ENCODE measurements at regions of chr14 and their contacts with region 1.

Region 1: GRCh38 chr14:21034707-21035106 is at the start of gene RNASE13:
- DNase-seq: no peak
- H3K4me3 ChIP-seq: no peak within 1 kb of the TSS
- H3K27ac ChIP-seq: no peak within 1 kb of the TSS
- H3K4me1 ChIP-seq: no peaks in the 10 kb centered on the region
- H3K27me3 ChIP-seq: no peaks in the 10 kb centered on the region; the same call in 1 of the 2 replicates
- CTCF ChIP-seq: no peak
- total RNA-seq, gene RNASE13: not detected in 2 replicates

Region 2: DNA sequence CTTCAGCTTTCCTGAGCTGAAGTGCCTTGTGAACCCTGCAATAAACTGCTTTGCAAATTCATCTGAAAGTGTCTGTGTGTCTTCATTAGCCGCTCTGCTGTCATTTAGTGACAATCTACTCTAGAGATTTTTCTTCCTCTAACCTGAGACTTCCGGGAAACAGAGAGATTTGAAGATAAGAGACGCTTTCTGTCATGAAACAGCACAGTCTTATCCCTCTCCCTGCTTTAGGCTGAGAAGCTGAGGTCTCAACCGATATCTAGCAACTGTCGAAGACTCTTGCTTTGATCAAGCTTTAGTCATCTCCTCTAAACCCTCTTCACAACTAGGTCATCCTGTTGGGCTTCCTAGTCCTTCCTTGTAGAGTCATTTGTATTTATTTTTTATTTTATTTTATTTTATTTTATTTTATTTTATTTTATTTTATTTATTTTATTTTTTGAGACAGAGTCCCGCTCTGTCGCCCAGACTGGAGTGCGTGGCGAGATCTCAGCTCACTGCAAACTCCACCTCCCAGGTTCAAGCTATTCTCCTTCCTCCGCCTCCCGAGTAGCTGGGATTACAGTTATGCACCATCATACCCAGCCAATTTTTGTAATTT is 78.2 kb before region 1 on chr14:
- CTCF ChIA-PET with region 1: interaction called, 10 read pairs
- POLR2A ChIA-PET with region 1: no interaction called
- intact Hi-C with region 1: no loop called
- DNase-seq: no peak
- H3K4me3 ChIP-seq: no peak overlapping the region
- H3K27ac ChIP-seq: no peak overlapping the region
- H3K4me1 ChIP-seq: no peaks in the 10 kb centered on the region
- H3K27me3 ChIP-seq: no peaks in the 10 kb centered on the region; the same call in 1 of the 2 replicates
- CTCF ChIP-seq: no peak

Region 3: GRCh38 chr14:21087294-21088091 is 52.8 kb after region 1 on chr14:
- CTCF ChIA-PET with region 1: no interaction called
- POLR2A ChIA-PET with region 1: no interaction called
- intact Hi-C with region 1: no loop called
- DNase-seq: no peak
- H3K4me3 ChIP-seq: no peak overlapping the region
- H3K27ac ChIP-seq: no peak overlapping the region
- H3K4me1 ChIP-seq: no peaks in the 10 kb centered on the region
- H3K27me3 ChIP-seq: no peaks in the 10 kb centered on the region
- CTCF ChIP-seq: no peak

Region 4: DNA sequence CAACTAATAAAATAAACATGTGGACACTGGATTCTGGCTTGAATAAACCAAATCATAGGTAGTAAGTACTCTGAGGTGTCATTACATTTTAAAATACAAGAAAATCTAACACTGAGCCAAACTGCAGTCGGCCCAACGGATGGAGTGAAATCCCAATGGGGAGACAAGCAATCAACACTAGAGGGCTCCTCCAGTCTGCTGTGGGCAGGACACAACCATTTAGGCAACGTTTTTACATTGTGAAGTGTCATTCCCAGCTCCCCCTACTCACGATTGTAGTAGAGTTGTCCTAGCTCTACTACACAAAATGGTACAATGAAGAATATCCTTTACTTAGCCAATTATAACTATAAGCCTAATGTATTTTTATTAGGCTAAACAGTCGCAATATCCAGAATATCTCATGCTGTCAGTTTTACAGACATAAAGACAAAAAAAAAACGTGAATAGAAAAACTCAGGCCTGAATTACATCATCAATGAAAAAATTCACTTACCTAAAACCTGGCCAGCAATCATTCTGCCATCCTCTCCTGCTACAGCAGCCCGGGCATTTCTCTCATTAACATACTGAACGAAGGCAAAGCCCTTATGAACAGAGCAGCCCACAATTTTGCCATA is 198.9 kb after region 1 on chr14:
- CTCF ChIA-PET with region 1: no interaction called
- POLR2A ChIA-PET with region 1: no interaction called
- intact Hi-C with region 1: no loop called
- DNase-seq: no peak
- H3K4me3 ChIP-seq: no peak overlapping the region
- H3K27ac ChIP-seq: peak overlapping the region; percentile 20; the same call in 1 of the 2 replicates
- H3K4me1 ChIP-seq: no peaks in the 10 kb centered on the region
- H3K27me3 ChIP-seq: no peaks in the 10 kb centered on the region
- CTCF ChIP-seq: no peak

Region 5: DNA sequence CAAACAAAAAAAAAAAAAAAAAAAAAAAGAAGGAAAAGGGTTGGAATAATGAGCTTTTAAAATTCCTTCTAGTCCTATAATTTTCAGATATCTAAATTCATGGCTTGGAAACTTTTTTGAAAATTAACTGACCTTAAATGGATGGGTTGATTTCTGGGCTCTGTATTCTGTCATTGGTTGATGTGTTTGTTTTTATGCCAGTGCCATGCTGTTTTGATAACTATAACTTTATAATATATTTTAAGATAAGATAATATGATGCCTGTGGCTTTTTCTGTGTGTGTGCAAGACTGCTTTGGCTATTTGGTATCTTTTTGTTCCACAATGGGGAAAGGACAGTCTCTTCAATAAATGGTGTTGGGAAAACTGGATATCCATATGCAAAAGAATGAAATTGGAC is 537.9 kb after region 1 on chr14:
- CTCF ChIA-PET with region 1: no interaction called
- POLR2A ChIA-PET with region 1: no interaction called
- intact Hi-C with region 1: no loop called
- DNase-seq: no peak
- H3K4me3 ChIP-seq: no peak overlapping the region
- H3K27ac ChIP-seq: no peak overlapping the region
- H3K4me1 ChIP-seq: no peaks in the 10 kb centered on the region
- H3K27me3 ChIP-seq: no peaks in the 10 kb centered on the region; the same call in none of the 2 replicates
- CTCF ChIP-seq: no peak

Region 6: DNA sequence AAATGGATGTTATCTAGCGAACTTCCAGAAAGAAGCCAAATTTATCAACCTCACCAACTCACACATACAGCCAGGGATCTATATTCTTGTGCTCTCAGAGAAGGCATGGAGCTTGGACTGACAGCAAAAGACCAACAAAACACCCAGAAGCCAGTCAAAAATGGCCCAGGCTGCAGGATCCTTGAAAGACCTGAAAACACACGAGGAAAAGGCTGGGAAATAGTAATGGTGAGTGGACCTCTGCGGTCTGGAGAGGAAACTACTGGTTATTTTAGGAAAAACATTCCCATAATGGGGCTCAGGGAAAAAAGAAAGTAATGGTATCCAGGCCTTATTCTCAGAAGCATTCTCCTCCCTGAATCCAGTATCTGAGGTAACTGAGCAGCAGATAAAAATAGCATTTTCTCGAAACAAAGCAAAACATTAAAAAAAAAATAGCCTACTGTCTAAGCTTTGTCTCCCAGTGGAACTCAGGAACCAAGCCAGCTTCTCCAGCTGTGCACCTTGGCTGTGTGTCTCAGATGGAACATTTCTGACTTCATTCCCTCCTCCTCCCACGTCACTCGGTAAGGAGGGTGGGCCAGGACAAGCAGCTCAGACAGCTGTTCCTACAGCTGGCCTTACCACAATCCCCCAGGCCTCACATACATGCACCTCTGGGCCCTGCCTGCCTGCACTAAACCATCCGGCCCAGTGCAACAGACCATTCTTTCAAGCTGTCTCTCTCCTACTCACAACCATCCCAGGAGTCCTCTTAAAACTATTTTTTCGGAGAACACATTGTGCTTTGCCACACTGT is 1304.4 kb after region 1 on chr14:
- CTCF ChIA-PET with region 1: no interaction called
- POLR2A ChIA-PET with region 1: no interaction called
- intact Hi-C with region 1: no loop called
- DNase-seq: no peak
- H3K4me3 ChIP-seq: no peak overlapping the region
- H3K27ac ChIP-seq: no peak overlapping the region
- H3K4me1 ChIP-seq: peaks cover 10% of the 10 kb centered on the region
- H3K27me3 ChIP-seq: no peaks in the 10 kb centered on the region
- CTCF ChIP-seq: no peak

Measured in PC-9 (cell line).